Posterior cingulate gyrus (tissue), 11 donors: ENCODE measurements at regions of chr19 and their contacts with region 1.

Region 1: GRCh38 chr19:9621156-9622037 is at the start of gene ZNF561:
- DNase-seq: peak; percentile 81 to 97 (median 89)

Region 2: DNA sequence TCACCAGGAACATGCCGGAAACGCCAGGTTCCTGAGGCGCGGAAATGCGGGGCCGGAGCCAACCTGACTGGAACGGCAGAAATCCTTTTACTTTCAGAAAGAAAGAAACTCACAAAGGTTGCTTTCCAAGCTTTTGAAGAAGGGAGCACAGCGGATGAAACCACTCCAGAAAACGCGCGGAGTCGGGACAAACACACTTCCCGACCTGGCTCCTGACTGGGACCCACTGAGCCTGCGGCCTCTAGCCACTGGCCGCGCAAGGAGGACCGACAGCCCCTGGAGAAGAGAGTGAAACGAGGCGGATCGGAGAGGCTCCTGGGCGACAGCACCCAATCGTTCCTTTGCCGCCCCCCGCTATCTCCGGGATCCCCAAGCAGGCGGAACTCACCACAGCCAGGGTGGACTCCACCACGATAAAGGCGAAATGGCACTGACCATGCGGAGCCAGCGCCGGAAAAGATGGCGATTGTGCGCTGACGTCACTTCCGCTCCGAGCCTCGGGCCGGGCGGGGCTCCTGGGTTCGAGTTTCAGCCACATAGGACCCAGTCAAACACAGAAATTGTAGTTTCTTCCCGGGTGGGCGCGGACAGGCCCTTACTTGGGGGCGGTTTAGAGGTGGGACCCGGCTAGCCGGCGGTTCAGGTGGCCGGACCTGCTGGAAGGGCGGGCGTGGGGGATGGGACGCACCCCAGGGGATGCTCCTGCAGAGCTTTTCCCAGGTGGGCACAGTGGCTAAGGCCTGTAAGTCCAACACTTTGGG is 37.1 kb before region 1 on chr19 and contains the start of gene ZNF121:
- intact Hi-C with region 1: loop called (anchors 2 kb)
- DNase-seq: peak; percentile 80 to 98 (median 88)

Region 3: DNA sequence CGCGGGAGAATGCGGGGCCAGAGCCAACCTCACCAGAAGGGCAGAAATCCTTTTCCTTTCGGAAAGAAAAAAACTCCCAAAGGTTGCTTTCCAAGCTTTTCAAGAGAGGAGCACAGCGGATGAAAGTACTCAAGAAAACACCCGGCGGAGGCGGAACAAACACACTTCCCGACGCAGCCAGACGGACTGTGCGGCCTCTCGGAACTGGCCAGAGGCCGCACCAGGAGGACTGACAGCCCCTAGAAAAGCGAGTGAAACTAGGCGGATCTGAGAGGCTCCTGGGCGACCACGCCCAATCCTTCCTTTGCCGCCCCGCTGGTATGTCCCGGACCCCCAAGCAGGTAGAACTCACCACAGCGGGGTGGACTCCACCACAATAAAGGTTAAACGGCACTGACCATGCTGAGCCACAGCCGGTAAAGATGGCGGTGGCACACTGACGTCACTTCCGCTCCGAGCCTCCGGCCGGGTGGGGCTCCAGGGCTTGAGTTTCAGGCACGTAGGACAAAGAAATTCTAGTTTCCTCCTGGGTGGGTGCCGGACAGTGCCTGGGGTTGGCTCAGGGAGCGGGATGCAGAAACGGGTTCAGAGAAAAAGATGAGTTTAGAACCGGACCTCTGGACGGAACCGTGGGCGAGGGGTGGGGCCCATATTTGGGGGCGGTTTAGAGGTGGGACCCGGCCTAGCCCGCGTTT is 53.4 kb after region 1 on chr19 and contains the start of gene ZNF562:
- intact Hi-C with region 1: loop called (anchors 2 kb)
- DNase-seq: peak; percentile 81 to 98 (median 88)

Region 4: GRCh38 chr19:9785367-9786331 is 164.3 kb after region 1 on chr19:
- intact Hi-C with region 1: loop called (anchors 1 kb)
- DNase-seq: peak; percentile 83 to 99 (median 91)